Panc1 (cell line): ENCODE measurements at regions of chr6 and their contacts with region 1.

Region 1: DNA sequence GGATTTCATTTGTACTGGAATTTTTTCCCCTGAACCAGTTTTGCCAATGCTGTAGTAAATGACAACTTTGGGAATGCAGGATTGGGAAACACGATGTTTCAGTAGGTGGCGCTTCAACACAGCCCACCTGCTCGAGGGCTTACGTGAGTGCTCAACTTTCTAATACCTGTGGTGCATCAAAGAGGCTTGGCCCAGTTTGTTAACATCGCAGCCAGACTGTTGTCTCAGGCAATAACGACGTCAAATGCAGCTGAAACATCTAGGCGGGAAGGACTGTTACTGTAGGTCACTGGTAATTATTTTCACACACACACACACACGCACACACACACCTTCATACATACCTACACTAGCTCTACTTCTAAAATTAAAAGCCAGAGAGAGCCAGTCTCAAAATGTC is 815.5 kb upstream of the SLC35B3 start:
- DNase-seq: peak; percentile 67
- ATAC-seq: peak; percentile 97
- H3K4me3 ChIP-seq: no peak overlapping the region
- H3K27ac ChIP-seq: peak overlapping the region; percentile 78
- H3K4me1 ChIP-seq: peaks cover 22% of the 10 kb centered on the region
- H3K27me3 ChIP-seq: no peaks in the 10 kb centered on the region
- CTCF ChIP-seq: peak; percentile 88

Region 2: GRCh38 chr6:8983188-8983688 is 267.6 kb before region 1 on chr6:
- CTCF ChIA-PET with region 1: no interaction called
- POLR2A ChIA-PET with region 1: no interaction called
- in situ Hi-C with region 1: no loop called
- intact Hi-C with region 1: loop called (anchors 5 kb)
- DNase-seq: peak; percentile 53
- ATAC-seq: peak; percentile 96
- H3K4me3 ChIP-seq: no peak overlapping the region
- H3K27ac ChIP-seq: peak overlapping the region; percentile 48; the same call in 1 of the 2 replicates
- H3K4me1 ChIP-seq: peaks cover 11% of the 10 kb centered on the region; the same call in 1 of the 2 replicates
- H3K27me3 ChIP-seq: no peaks in the 10 kb centered on the region
- CTCF ChIP-seq: peak; percentile 94

Region 3: GRCh38 chr6:9057937-9058336 is 192.9 kb before region 1 on chr6:
- CTCF ChIA-PET with region 1: no interaction called
- POLR2A ChIA-PET with region 1: no interaction called
- in situ Hi-C with region 1: no loop called
- intact Hi-C with region 1: no loop called
- DNase-seq: no peak
- ATAC-seq: no peak
- H3K4me3 ChIP-seq: no peak overlapping the region
- H3K27ac ChIP-seq: no peak overlapping the region
- H3K4me1 ChIP-seq: no peaks in the 10 kb centered on the region
- H3K27me3 ChIP-seq: no peaks in the 10 kb centered on the region
- CTCF ChIP-seq: no peak

Region 4: DNA sequence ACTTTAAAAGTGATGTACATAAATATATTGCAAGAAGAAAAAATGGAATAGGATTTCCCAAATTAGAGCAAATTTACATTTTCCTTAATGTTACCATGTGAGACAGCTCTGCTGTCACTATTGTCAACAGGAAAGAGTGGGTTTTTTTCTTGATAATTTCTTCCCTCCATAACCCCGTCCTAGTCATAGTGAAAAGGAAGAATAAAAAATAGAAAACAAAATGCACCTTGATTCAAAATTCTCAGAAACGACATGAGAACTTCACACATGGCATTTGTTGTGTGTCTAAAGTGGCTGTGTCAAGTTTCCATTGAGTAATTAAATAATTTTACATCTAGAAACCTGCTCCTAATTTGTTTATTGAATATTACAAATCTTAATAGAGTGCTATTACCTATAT is 129.7 kb after region 1 on chr6:
- CTCF ChIA-PET with region 1: no interaction called
- POLR2A ChIA-PET with region 1: no interaction called
- in situ Hi-C with region 1: no loop called
- intact Hi-C with region 1: no loop called
- DNase-seq: no peak
- ATAC-seq: no peak
- H3K4me3 ChIP-seq: no peak overlapping the region
- H3K27ac ChIP-seq: no peak overlapping the region
- H3K4me1 ChIP-seq: no peaks in the 10 kb centered on the region
- H3K27me3 ChIP-seq: no peaks in the 10 kb centered on the region
- CTCF ChIP-seq: no peak

Region 5: DNA sequence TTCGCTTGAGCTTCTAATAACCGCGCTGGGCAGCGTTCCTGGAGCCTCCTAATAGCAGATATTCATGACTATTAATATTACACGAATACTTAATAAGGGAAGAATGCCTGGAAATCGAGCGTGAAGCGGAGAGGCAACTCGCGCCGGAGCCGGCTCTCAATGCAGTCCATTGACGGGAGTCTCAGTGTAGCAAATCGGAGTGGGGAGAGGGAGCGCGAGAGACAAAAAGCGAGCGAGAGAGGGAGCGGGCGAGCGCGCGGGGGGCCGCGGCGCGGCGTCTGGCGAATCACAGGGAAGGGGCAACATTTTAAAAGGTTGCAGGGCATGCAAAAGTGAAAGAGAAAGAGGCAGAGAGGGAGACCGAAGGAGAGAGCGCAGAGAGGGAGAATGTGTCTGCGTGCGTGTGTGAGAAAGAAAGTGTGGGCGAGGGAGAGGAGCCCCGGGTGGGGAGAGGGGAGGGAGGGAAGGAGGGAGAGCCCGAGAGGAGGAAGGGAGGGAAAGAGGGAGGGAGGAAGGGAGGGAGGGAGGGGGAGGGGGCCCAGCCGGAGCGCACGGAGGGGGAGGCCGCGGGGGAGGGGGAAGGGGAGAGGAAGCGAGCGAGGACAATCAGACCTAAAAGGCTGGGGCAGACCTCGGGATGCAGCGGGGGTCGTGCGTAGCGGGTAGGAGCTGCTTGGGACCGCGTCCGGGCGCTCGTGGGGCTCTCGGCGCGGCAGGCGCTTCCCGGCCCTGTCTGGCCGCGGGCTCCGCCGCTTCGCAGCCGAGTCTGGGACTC is 1161.3 kb after region 1 on chr6:
- CTCF ChIA-PET with region 1: no interaction called
- POLR2A ChIA-PET with region 1: no interaction called
- in situ Hi-C with region 1: no loop called
- intact Hi-C with region 1: loop called (anchors 5 kb)
- DNase-seq: no peak
- ATAC-seq: peak; percentile 59
- H3K4me3 ChIP-seq: peak overlapping the region; percentile 96 to 100
- H3K27ac ChIP-seq: peak overlapping the region; percentile 99
- H3K4me1 ChIP-seq: peaks cover 42% of the 10 kb centered on the region
- H3K27me3 ChIP-seq: no peaks in the 10 kb centered on the region
- CTCF ChIP-seq: no peak

Region 6: DNA sequence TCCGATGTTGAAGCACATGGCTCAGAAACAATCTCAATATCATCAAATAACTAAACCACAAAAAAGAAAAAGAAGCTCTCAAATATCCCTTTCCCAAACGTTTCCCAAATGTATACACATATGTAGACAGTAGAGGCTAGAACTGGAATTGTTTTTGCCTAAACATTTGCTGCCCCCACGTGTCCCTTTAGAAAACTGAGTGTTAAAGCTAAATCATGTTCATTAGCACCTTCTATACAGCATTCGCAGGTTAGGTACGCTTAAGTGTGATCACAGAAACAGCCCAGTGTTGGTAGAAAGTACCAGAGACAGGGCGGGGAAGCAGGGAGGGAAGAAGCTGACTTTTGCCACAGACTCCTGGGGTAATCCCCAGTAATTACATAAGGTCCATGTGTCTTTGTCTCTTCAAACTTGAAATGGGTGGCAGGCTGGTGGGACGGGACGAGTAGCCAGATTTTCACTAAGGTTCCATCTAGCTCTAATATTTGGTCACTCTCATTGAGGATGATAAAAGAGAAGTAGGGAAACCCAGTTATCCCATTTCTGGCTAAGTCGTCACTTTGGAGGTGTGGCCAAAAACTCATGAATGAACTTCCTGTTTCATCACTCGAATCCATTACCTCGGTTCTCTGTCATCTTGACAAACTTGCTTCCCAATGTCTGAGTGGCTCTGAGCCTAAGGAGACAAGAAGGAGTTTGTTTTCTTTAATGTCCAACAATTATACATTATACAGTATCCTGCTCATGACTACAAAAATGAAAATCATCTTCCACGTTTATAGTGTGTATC is 1179.0 kb after region 1 on chr6:
- CTCF ChIA-PET with region 1: no interaction called
- POLR2A ChIA-PET with region 1: no interaction called
- in situ Hi-C with region 1: no loop called
- intact Hi-C with region 1: loop called (anchors 5 kb)
- DNase-seq: no peak
- ATAC-seq: peak; percentile 83
- H3K4me3 ChIP-seq: no peak overlapping the region
- H3K27ac ChIP-seq: peak overlapping the region; percentile 72; the same call in 1 of the 2 replicates
- H3K4me1 ChIP-seq: peaks cover 40% of the 10 kb centered on the region
- H3K27me3 ChIP-seq: no peaks in the 10 kb centered on the region
- CTCF ChIP-seq: peak; percentile 77